A549 (cell line): ENCODE measurements at regions of chr20 and their contacts with region 1.

Region 1: GRCh38 chr20:22523499-22524392 is 60.6 kb downstream of the FOXA2 start:
- DNase-seq: peak in 1 of 2 experiments; percentile 28
- ATAC-seq: peak; percentile 54 to 55; a peak in 4 of 6 replicates
- H3K4me3 ChIP-seq: no peak overlapping the region
- H3K27ac ChIP-seq: peak overlapping the region; percentile 14 to 65; a peak in 3 of 6 replicates
- H3K4me1 ChIP-seq: peaks cover 14% of the 10 kb centered on the region
- CTCF ChIP-seq: no peak
- EP300 ChIP-seq: no peak
- POLR2A ChIP-seq: no peak
- RAD21 ChIP-seq: no peak

Region 2: DNA sequence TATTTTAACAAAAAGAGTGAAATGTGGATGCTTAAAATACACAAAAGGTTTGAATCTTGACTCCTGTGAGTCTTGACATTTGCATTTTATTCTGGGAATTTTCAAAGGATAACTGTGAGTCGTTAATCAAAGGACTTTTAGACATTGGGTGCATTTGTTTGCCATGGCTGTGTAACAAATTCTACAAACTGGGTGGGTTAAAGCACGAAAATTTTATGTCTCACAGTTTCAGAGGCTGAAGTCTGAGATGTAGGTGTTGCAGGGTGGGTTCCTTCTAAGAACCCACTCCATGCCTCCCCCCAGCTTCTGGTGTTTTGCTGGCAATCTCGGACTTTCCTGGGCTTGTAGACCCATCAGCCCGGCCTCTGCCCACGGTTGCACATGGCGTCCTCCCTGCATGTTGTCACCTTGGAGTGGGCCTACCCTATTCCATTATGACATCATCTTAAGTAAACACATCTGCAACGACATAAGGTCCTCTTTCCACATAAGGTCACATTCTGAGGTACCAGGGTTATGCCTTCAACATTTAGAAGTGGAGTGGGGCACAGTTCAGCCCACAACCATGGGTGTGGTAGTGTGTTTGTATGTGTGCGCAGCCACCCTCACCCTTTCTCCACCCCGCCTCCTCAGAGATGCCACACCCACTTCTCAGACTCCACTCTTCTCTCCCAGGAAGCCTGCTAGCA is 52.4 kb before region 1 on chr20:
- CTCF ChIA-PET with region 1: no interaction called
- POLR2A ChIA-PET with region 1: no interaction called
- DNase-seq: peak; percentile 56 to 93
- ATAC-seq: peak; percentile 70 to 78
- H3K4me3 ChIP-seq: no peak overlapping the region; the same call in 2 of the 3 replicates
- H3K27ac ChIP-seq: peak overlapping the region; percentile 65 to 80
- H3K4me1 ChIP-seq: peaks cover 38% of the 10 kb centered on the region
- CTCF ChIP-seq: no peak
- EP300 ChIP-seq: 0 out of 5 replicates have a peak, but pooled peaks of 1 of the 2 experiments have one; percentile 23
- POLR2A ChIP-seq: no peak
- RAD21 ChIP-seq: peak in 1 of 2 experiments; percentile 11; a peak in 1 of 5 replicates

Region 3: GRCh38 chr20:22533823-22534751 is 10.3 kb after region 1 on chr20:
- CTCF ChIA-PET with region 1: interaction called, 10 read pairs
- POLR2A ChIA-PET with region 1: no interaction called
- DNase-seq: no peak
- ATAC-seq: no peak
- H3K4me3 ChIP-seq: no peak overlapping the region
- H3K27ac ChIP-seq: no peak overlapping the region
- H3K4me1 ChIP-seq: peaks cover 19% of the 10 kb centered on the region
- CTCF ChIP-seq: no peak
- EP300 ChIP-seq: no peak
- POLR2A ChIP-seq: no peak
- RAD21 ChIP-seq: no peak